Common myeloid progenitor, CD34-positive (primary cell): ENCODE measurements at regions of chr2 and their contacts with region 1.

Region 1: GRCh38 chr2:240232961-240233893 is 92.8 kb upstream of the OTOS start:
- DNase-seq: peak; percentile 65 to 79 (median 77)
- H3K4me3 ChIP-seq: peak overlapping the region in 4 of 7 experiments; percentile 26 to 60 (median 47)
- H3K27ac ChIP-seq: no peak overlapping the region
- H3K4me1 ChIP-seq: peaks cover 0 to 27% (median 10%) of the 10 kb centered on the region in 4 experiments
- H3K27me3 ChIP-seq: peaks cover 0 to 4% (median 0%) of the 10 kb centered on the region in 5 experiments

Region 2: GRCh38 chr2:240205348-240205747 is 27.9 kb before region 1 on chr2:
- CTCF ChIA-PET with region 1: no interaction called
- POLR2A ChIA-PET with region 1: no interaction called
- DNase-seq: no peak
- H3K4me3 ChIP-seq: no peak overlapping the region
- H3K27ac ChIP-seq: no peak overlapping the region
- H3K4me1 ChIP-seq: no peaks in the 10 kb centered on the region
- H3K27me3 ChIP-seq: peaks cover 0 to 53% (median 4%) of the 10 kb centered on the region in 5 experiments

Region 3: GRCh38 chr2:240437861-240438809 is 204.9 kb after region 1 on chr2:
- CTCF ChIA-PET with region 1: interaction called, 15 read pairs
- POLR2A ChIA-PET with region 1: no interaction called
- DNase-seq: peak; percentile 58 to 75 (median 70)
- H3K4me3 ChIP-seq: no peak overlapping the region
- H3K27ac ChIP-seq: no peak overlapping the region
- H3K4me1 ChIP-seq: peaks cover 0 to 24% (median 13%) of the 10 kb centered on the region in 4 experiments
- H3K27me3 ChIP-seq: peaks cover 0 to 46% (median 24%) of the 10 kb centered on the region in 5 experiments